B cell (primary cell): ENCODE measurements at regions of chr2 and their contacts with region 1.

Region 1: DNA sequence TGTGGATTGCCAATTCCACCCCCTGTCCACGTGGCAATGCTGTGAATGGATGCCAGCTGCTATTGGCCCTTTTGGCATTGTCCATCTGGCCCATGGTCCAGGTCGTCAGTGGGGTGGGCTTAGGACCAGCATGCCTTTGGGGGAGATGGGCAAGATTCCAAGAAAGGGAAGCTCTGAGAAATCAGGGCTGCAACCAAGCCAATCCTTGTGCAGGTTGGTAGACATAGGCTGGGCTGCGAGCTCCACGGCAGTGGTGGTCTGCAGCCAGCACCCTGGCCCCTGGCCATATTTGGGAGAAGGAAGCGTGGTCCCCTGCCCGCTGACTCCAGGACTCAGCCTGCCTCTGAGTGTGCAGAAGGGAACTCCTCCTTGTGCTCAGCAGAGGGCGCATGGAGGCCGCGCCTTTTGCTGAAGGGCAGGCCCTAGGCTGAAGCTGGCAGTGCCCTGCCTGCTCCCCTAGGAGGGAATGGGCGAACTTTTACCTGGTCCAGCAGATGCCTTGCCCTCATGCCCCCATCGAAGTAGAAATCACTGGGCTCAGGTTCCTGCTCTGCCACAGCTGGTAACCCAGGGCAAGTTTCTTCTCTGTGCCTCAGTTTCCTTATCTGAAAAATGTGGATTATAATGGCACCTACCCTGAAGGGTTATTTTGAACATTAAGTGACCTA is 5.4 kb downstream of the SPR start:
- DNase-seq: peak; percentile 64
- ATAC-seq: peak; percentile 83
- H3K4me3 ChIP-seq: no peak overlapping the region
- H3K4me3 Mint-ChIP-seq: no peak overlapping the region
- H3K27ac ChIP-seq: no peak overlapping the region
- H3K27ac Mint-ChIP-seq: no peak overlapping the region
- H3K4me1 ChIP-seq: peaks cover 9 to 13% of the 10 kb centered on the region in 2 donors
- H3K4me1 Mint-ChIP-seq: peaks cover 9% of the 10 kb centered on the region
- H3K27me3 ChIP-seq: peaks cover 0 to 83% (median 26%) of the 10 kb centered on the region in 4 experiments
- H3K27me3 Mint-ChIP-seq: peaks cover 53% of the 10 kb centered on the region
- CTCF ChIP-seq: peak; percentile 66

Region 2: GRCh38 chr2:72973566-72974435 is 81.2 kb after region 1 on chr2:
- CTCF ChIA-PET with region 1: interaction called, 7 read pairs
- POLR2A ChIA-PET with region 1: no interaction called
- intact Hi-C with region 1: loop called (anchors 1 kb)
- DNase-seq: peak; percentile 44
- ATAC-seq: peak; percentile 63
- H3K4me3 ChIP-seq: no peak overlapping the region
- H3K4me3 Mint-ChIP-seq: no peak overlapping the region
- H3K27ac ChIP-seq: no peak overlapping the region
- H3K27ac Mint-ChIP-seq: no peak overlapping the region
- H3K4me1 ChIP-seq: no peaks in the 10 kb centered on the region
- H3K4me1 Mint-ChIP-seq: no peaks in the 10 kb centered on the region
- H3K27me3 ChIP-seq: no peaks in the 10 kb centered on the region
- H3K27me3 Mint-ChIP-seq: no peaks in the 10 kb centered on the region
- CTCF ChIP-seq: peak; percentile 72